PC-3 (cell line): ENCODE measurements at regions of chr12 and their contacts with region 1.

Region 1: DNA sequence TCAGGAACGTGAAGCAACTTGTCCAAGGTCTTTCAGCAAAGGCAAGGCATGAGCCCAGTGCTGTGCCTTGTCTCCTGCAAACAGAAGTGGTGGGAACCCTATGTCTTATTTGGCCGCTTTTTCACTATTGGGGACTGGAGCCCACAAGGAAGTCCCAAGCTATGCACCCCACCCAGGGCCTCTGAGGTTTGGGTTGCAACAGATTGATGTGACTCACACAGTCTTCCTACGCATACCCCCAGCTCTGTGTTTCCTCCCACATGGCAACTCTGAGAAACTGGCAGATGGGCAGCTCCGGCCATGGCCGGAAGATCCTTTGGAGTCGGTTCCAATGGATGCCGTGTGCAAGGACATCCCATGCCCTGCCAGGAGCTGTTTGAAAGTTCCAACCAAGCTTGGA is 28.3 kb upstream of the CMKLR1 start:
- DNase-seq: no peak
- ATAC-seq: no peak
- H3K4me3 ChIP-seq: no peak overlapping the region
- H3K27ac ChIP-seq: no peak overlapping the region
- H3K4me1 ChIP-seq: no peaks in the 10 kb centered on the region
- H3K27me3 ChIP-seq: peaks cover 63% of the 10 kb centered on the region
- CTCF ChIP-seq: no peak

Region 2: GRCh38 chr12:108273217-108273616 is 94.2 kb before region 1 on chr12:
- CTCF ChIA-PET with region 1: interaction called, 12 read pairs
- POLR2A ChIA-PET with region 1: no interaction called
- intact Hi-C with region 1: no loop called
- DNase-seq: no peak
- ATAC-seq: no peak
- H3K4me3 ChIP-seq: no peak overlapping the region
- H3K27ac ChIP-seq: no peak overlapping the region
- H3K4me1 ChIP-seq: no peaks in the 10 kb centered on the region
- H3K27me3 ChIP-seq: 0 out of 2 replicates have a peak, but pooled peaks cover 4% of the 10 kb centered on the region
- CTCF ChIP-seq: no peak